OCI-LY7 (cell line): ENCODE measurements at regions of chr2 and their contacts with region 1.

Region 1: DNA sequence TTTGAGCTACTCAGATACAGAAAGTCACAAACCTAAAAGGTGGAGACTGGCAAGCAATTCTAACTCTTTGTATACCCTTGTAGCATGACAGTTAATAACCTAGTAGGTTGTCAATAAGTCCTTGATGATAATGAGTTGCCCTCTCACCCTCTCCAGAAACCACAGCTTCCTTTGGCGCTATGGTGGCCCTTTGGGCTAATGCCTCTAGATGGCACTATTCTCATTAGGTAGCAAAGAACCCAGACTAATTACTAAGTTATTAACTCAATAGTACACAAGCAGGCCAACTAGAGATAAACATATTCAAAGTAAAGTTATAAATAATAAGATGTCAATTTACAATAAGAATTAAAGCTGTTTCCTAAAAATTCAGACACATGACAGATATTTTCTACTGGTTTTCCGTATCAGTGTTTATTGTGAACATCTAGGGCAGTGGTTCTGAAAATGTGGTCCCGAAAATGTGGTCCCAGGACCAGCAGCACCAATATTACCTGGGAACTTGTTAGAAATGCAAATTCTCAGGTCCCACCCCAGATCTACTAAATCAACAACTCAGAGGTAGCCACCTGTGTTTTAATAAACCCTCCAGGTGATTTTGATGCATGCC is 41.1 kb downstream of the LDAH start:
- DNase-seq: peak; percentile 19
- H3K4me3 ChIP-seq: no peak overlapping the region
- H3K27ac ChIP-seq: no peak overlapping the region
- H3K4me1 ChIP-seq: no peaks in the 10 kb centered on the region
- CTCF ChIP-seq: peak; percentile 88

Region 2: GRCh38 chr2:20635675-20636584 is 145.8 kb before region 1 on chr2:
- CTCF ChIA-PET with region 1: no interaction called
- POLR2A ChIA-PET with region 1: no interaction called
- intact Hi-C with region 1: no loop called
- DNase-seq: peak; percentile 49
- H3K4me3 ChIP-seq: no peak overlapping the region
- H3K27ac ChIP-seq: no peak overlapping the region
- H3K4me1 ChIP-seq: peaks cover 14% of the 10 kb centered on the region
- CTCF ChIP-seq: peak; percentile 75

Region 3: DNA sequence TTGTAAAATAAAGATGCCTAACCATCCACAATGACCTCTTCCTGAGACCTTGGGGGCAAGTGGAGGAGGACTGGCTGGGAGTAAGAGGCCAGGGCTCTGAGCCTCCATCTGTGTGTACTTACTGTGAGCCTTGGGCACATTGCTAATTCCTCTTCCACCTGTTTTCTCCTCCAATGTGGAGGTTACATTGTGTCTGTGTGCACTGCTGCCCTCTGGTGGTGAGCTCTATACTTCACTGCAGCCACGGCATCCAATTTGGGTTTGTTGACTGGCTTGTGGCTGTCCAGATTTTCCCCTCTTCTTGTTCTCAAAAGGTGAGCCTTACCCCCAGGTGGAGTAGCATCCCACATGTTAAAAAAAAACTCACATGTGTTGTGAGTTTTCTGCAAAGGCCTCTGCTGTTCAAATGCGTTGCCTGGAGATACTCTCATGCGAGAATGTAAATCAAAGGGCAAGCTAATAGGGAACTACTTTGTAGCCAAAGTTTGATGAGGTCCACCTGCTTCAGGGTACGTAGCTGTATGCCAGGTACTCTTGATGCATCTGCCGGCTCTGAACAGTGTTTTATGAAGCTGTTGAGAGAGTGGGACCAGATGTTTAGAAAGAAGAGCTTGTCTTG is 181.3 kb after region 1 on chr2:
- CTCF ChIA-PET with region 1: no interaction called
- POLR2A ChIA-PET with region 1: no interaction called
- intact Hi-C with region 1: loop called (anchors 2 kb)
- DNase-seq: peak; percentile 66
- H3K4me3 ChIP-seq: no peak overlapping the region
- H3K27ac ChIP-seq: no peak overlapping the region
- H3K4me1 ChIP-seq: no peaks in the 10 kb centered on the region
- CTCF ChIP-seq: peak; percentile 91